A673 (cell line): ENCODE measurements at regions of chr16 and their contacts with region 1.

Region 1: GRCh38 chr16:106623-107324 is 28.7 kb downstream of the MPG start:
- DNase-seq: peak; percentile 85
- H3K4me3 ChIP-seq: no peak overlapping the region
- H3K27ac ChIP-seq: no peak overlapping the region
- H3K4me1 ChIP-seq: no peaks in the 10 kb centered on the region
- H3K27me3 ChIP-seq: no peaks in the 10 kb centered on the region
- CTCF ChIP-seq: peak; percentile 83

Region 2: DNA sequence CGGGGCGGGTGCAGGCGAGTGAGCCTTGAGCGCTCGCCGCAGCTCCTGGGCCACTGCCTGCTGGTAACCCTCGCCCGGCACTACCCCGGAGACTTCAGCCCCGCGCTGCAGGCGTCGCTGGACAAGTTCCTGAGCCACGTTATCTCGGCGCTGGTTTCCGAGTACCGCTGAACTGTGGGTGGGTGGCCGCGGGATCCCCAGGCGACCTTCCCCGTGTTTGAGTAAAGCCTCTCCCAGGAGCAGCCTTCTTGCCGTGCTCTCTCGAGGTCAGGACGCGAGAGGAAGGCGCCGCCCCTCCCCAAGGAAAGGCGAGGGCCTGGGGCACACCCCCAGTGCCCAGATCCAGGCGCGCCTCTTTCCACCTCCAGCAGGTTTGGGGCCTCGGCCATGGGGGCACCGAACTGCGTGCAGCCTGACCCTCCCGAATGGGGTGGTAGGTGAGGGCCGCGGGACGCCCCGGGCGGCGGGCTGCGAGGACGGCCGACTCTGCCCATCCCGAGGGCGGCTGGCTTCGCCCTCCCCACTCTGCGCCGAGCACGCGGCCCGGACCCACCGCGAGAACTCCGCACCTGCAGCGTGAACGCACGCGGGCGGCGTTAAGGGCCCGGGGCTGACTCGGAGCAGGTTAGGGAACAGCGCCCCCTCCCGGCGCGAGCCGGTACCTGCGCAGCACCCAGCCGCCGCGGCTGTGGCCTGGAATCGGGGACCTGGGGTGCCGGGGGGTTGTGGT is 74.3 kb after region 1 on chr16:
- CTCF ChIA-PET with region 1: interaction called, 10 read pairs
- POLR2A ChIA-PET with region 1: no interaction called
- intact Hi-C with region 1: loop called (anchors 1 kb)
- DNase-seq: peak; percentile 92
- H3K4me3 ChIP-seq: peak overlapping the region; percentile 52
- H3K27ac ChIP-seq: no peak overlapping the region
- H3K4me1 ChIP-seq: peaks cover 19% of the 10 kb centered on the region
- H3K27me3 ChIP-seq: peaks cover 13% of the 10 kb centered on the region
- CTCF ChIP-seq: peak; percentile 95

Region 3: DNA sequence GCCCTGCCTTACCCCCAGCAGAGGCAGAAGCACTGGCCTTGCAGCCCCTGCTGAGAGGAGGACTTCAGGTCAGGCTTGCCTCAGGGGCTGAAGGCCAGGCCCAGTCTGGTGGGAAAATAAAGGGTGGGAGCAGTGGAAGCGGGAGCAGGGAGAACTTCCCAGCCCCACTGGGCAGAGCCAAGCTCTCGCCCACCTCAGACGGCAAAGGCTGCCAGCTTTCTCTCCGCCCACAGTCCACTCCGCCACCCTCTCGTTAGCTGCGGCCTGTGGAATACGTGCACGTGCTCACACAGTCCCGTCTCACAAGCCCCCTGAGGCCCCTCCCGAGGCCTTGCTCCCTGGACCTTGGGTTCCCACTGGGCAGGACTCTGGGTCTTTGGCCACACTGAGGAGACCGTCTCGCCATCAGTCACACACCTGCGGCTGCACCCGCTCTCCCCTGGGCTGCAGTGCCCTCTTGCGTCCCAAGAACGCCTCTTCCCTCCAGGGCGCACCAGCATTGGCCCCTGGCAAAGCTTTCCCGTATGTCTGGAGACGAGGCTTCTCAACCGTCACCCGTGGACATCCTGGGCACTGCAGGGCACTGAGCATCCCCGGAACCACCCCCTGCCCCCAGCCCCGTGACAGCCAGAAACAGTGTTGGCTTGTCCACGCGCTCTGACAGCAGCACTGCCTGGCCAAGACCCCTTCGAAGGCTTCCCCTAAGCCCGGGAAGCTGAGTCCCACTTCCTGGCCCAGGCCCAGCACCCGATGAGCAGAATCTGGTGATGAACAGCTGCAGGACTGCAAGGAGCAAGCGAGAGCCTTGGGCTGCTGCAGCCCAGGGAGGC is 255.3 kb after region 1 on chr16:
- CTCF ChIA-PET with region 1: interaction called, 25 read pairs
- POLR2A ChIA-PET with region 1: no interaction called
- intact Hi-C with region 1: loop called (anchors 5 kb)
- DNase-seq: peak; percentile 88
- H3K4me3 ChIP-seq: no peak overlapping the region
- H3K27ac ChIP-seq: no peak overlapping the region
- H3K4me1 ChIP-seq: no peaks in the 10 kb centered on the region
- H3K27me3 ChIP-seq: no peaks in the 10 kb centered on the region
- CTCF ChIP-seq: peak; percentile 89